Activated CD4-positive, alpha-beta T cell treated with anti-CD3 and anti-CD28 coated beads, Interleukin-2, amount 10 ng/mL, durations not matched to agents 24 days and 14 days (primary cell): ENCODE measurements at regions of chr6 and their contacts with region 1.

Region 1: DNA sequence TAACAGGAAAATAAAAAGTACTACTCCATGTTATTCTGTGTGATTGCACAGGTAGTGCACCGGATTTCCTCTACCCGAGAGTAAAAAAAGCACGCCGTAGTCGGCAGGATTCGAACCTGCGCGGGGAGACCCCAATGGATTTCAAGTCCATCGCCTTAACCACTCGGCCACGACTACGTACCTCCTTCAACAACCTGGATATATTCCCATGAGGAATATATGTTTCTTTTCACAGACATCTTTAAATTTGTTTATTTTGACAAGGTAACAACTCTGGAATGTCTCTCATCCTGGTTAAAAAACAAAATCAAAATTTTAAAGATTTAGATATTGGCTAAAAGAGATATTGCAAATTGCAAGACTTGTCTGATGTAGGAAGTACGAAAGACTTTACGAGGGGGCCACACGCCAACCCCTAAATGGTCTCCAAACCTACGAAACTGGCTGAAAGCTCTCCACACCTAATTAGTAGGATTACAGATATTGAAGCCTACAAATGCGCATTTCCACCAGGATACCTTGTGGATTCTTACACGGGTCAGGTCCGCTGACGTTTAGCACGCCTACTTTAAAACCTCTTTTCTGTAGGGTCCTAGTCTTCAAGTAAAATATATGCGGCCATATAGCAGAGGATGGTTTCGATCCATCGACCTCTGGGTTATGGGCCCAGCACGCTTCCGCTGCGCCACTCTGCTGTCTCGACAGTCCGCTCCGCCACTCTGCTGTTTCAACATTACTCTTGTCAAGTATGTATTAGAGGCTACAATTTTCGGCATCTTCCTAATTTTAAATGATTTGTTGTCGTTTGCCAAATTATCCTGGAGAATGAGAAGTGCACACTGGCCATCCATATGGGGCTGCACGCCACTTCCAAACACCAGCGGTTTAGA is 52.3 kb upstream of the BTN3A2 start:
- DNase-seq: peak; percentile 94
- H3K4me3 Mint-ChIP-seq: peak overlapping the region; percentile 91
- H3K27ac Mint-ChIP-seq: peak overlapping the region; percentile 81
- H3K4me1 Mint-ChIP-seq: peaks cover 41% of the 10 kb centered on the region
- H3K27me3 Mint-ChIP-seq: peaks cover 2% of the 10 kb centered on the region

Region 2: GRCh38 chr6:26103770-26104456 is 208.8 kb before region 1 on chr6:
- intact Hi-C with region 1: no loop called
- DNase-seq: peak; percentile 97
- H3K4me3 Mint-ChIP-seq: peak overlapping the region; percentile 85
- H3K27ac Mint-ChIP-seq: peak overlapping the region; percentile 94
- H3K4me1 Mint-ChIP-seq: peaks cover 19% of the 10 kb centered on the region
- H3K27me3 Mint-ChIP-seq: peaks cover 5% of the 10 kb centered on the region

Region 3: GRCh38 chr6:26175428-26176181 is 137.1 kb before region 1 on chr6:
- intact Hi-C with region 1: loop called (anchors 5 kb)
- DNase-seq: peak; percentile 91
- H3K4me3 Mint-ChIP-seq: peak overlapping the region; percentile 40
- H3K27ac Mint-ChIP-seq: peak overlapping the region; percentile 63
- H3K4me1 Mint-ChIP-seq: peaks cover 45% of the 10 kb centered on the region
- H3K27me3 Mint-ChIP-seq: no peaks in the 10 kb centered on the region

Region 4: GRCh38 chr6:26249957-26250697 is 62.6 kb before region 1 on chr6:
- intact Hi-C with region 1: no loop called
- DNase-seq: peak; percentile 92
- H3K4me3 Mint-ChIP-seq: peak overlapping the region; percentile 95
- H3K27ac Mint-ChIP-seq: peak overlapping the region; percentile 95
- H3K4me1 Mint-ChIP-seq: peaks cover 37% of the 10 kb centered on the region
- H3K27me3 Mint-ChIP-seq: no peaks in the 10 kb centered on the region

Region 5: GRCh38 chr6:26322645-26323482 is 10.1 kb after region 1 on chr6:
- intact Hi-C with region 1: loop called (anchors 1 kb)
- DNase-seq: peak; percentile 92
- H3K4me3 Mint-ChIP-seq: peak overlapping the region; percentile 89
- H3K27ac Mint-ChIP-seq: peak overlapping the region; percentile 93
- H3K4me1 Mint-ChIP-seq: peaks cover 37% of the 10 kb centered on the region
- H3K27me3 Mint-ChIP-seq: peaks cover 6% of the 10 kb centered on the region

Region 6: GRCh38 chr6:26329763-26330511 is 17.2 kb after region 1 on chr6:
- intact Hi-C with region 1: loop called (anchors 1 kb)
- DNase-seq: peak; percentile 89
- H3K4me3 Mint-ChIP-seq: peak overlapping the region; percentile 87
- H3K27ac Mint-ChIP-seq: peak overlapping the region; percentile 86
- H3K4me1 Mint-ChIP-seq: peaks cover 48% of the 10 kb centered on the region
- H3K27me3 Mint-ChIP-seq: peaks cover 25% of the 10 kb centered on the region

Region 7: GRCh38 chr6:26351544-26351953 is 38.8 kb after region 1 on chr6:
- intact Hi-C with region 1: no loop called
- DNase-seq: no peak
- H3K4me3 Mint-ChIP-seq: no peak overlapping the region
- H3K27ac Mint-ChIP-seq: no peak overlapping the region
- H3K4me1 Mint-ChIP-seq: peaks cover 4% of the 10 kb centered on the region
- H3K27me3 Mint-ChIP-seq: peaks cover 6% of the 10 kb centered on the region

Region 8: DNA sequence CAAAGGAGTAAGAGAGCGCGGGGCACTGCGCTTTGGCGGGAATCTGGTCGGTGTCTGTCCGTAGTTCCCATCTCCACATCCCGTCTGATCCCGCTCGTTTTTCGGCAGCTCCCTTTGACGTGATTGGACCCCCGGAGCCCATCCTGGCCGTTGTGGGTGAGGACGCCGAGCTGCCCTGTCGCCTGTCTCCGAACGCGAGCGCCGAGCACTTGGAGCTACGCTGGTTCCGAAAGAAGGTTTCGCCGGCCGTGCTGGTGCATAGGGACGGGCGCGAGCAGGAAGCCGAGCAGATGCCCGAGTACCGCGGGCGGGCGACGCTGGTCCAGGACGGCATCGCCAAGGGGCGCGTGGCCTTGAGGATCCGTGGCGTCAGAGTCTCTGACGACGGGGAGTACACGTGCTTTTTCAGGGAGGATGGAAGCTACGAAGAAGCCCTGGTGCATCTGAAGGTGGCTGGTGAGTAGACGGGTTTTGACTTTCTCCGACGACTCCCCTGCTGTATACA is 188.8 kb after region 1 on chr6:
- intact Hi-C with region 1: no loop called
- DNase-seq: peak; percentile 80
- H3K4me3 Mint-ChIP-seq: peak overlapping the region; percentile 81
- H3K27ac Mint-ChIP-seq: no peak overlapping the region
- H3K4me1 Mint-ChIP-seq: peaks cover 20% of the 10 kb centered on the region
- H3K27me3 Mint-ChIP-seq: peaks cover 49% of the 10 kb centered on the region

Region 9: GRCh38 chr6:26553635-26554446 is 241.1 kb after region 1 on chr6:
- intact Hi-C with region 1: loop called (anchors 1 kb)
- DNase-seq: peak; percentile 94
- H3K4me3 Mint-ChIP-seq: no peak overlapping the region
- H3K27ac Mint-ChIP-seq: no peak overlapping the region
- H3K4me1 Mint-ChIP-seq: peaks cover 22% of the 10 kb centered on the region
- H3K27me3 Mint-ChIP-seq: peaks cover 2% of the 10 kb centered on the region